Caco-2 (cell line): ENCODE measurements at regions of chr6 and their contacts with region 1.

Region 1: GRCh38 chr6:1263039-1263849 is 48.7 kb upstream of the FOXQ1 start:
- DNase-seq: peak; percentile 82 to 83
- H3K4me3 ChIP-seq: no peak overlapping the region
- H3K4me3 Mint-ChIP-seq: peak overlapping the region; percentile 73
- H3K27ac Mint-ChIP-seq: peak overlapping the region; percentile 100
- H3K4me1 ChIP-seq: peaks cover 67% of the 10 kb centered on the region
- H3K4me1 Mint-ChIP-seq: peaks cover 30% of the 10 kb centered on the region
- H3K27me3 ChIP-seq: no peaks in the 10 kb centered on the region
- H3K27me3 Mint-ChIP-seq: no peaks in the 10 kb centered on the region
- CTCF ChIP-seq: peak in 1 of 2 experiments; percentile 35

Region 2: GRCh38 chr6:1055015-1055921 is 208.0 kb before region 1 on chr6:
- CTCF ChIA-PET with region 1: interaction called, 3 read pairs
- POLR2A ChIA-PET with region 1: no interaction called
- intact Hi-C with region 1: loop called (anchors 1 kb)
- DNase-seq: peak; percentile 93
- H3K4me3 ChIP-seq: no peak overlapping the region
- H3K4me3 Mint-ChIP-seq: no peak overlapping the region
- H3K27ac Mint-ChIP-seq: no peak overlapping the region
- H3K4me1 ChIP-seq: peaks cover 52% of the 10 kb centered on the region
- H3K4me1 Mint-ChIP-seq: peaks cover 18% of the 10 kb centered on the region
- H3K27me3 ChIP-seq: no peaks in the 10 kb centered on the region
- H3K27me3 Mint-ChIP-seq: no peaks in the 10 kb centered on the region
- CTCF ChIP-seq: no peak

Region 3: DNA sequence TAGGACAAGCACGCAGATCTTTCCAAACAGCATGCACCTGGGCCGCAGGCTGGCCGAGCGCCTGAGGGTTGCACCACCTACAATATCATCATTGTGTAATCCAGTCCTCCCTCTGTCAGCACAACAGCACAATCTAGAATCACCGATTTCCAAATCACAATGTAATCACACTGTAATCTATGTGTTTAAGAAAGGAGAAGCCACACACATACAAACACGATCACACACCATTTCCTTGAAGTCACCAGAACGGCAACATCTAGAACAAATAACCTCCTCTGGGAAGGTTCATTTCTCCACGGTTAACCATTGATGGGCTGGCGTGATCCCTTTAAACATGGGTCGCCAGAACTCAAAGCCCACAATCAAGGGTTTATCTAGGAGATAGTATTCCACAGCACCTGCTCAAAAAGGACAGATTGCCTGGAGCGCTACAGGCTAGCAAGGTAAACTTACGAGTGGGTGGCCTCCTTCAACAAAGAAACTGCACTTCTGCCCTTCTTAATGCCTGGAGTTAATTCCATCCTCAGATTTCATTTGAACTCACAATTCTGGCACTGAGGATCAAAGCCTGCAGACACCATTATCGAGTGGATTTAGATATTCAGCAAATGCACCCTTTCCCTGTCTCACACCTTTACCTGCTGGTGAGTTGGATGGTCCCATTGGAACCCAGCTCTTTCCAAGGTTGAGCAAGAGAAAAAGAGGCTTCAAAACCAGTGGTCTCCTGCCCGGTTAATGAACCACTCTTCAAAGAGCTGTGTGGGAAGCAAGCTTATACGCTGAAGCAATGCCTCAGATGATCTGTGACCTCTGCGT is 35.1 kb before region 1 on chr6:
- CTCF ChIA-PET with region 1: interaction called, 10 read pairs
- POLR2A ChIA-PET with region 1: interaction called, 13 read pairs
- intact Hi-C with region 1: loop called (anchors 1 kb)
- DNase-seq: peak; percentile 91 to 94
- H3K4me3 ChIP-seq: peak overlapping the region; percentile 0; the same call in 1 of the 2 replicates
- H3K4me3 Mint-ChIP-seq: peak overlapping the region; percentile 52
- H3K27ac Mint-ChIP-seq: peak overlapping the region; percentile 67
- H3K4me1 ChIP-seq: peaks cover 57% of the 10 kb centered on the region
- H3K4me1 Mint-ChIP-seq: peaks cover 63% of the 10 kb centered on the region
- H3K27me3 ChIP-seq: no peaks in the 10 kb centered on the region
- H3K27me3 Mint-ChIP-seq: no peaks in the 10 kb centered on the region
- CTCF ChIP-seq: no peak

Region 4: GRCh38 chr6:1281746-1282145 is 18.5 kb after region 1 on chr6:
- CTCF ChIA-PET with region 1: no interaction called
- POLR2A ChIA-PET with region 1: no interaction called
- intact Hi-C with region 1: loop called (anchors 1 kb)
- DNase-seq: no peak
- H3K4me3 ChIP-seq: no peak overlapping the region
- H3K4me3 Mint-ChIP-seq: no peak overlapping the region
- H3K27ac Mint-ChIP-seq: peak overlapping the region; percentile 45
- H3K4me1 ChIP-seq: peaks cover 41% of the 10 kb centered on the region
- H3K4me1 Mint-ChIP-seq: peaks cover 34% of the 10 kb centered on the region
- H3K27me3 ChIP-seq: no peaks in the 10 kb centered on the region
- H3K27me3 Mint-ChIP-seq: no peaks in the 10 kb centered on the region
- CTCF ChIP-seq: no peak

Region 5: GRCh38 chr6:1297746-1298145 is 34.5 kb after region 1 on chr6:
- CTCF ChIA-PET with region 1: no interaction called
- POLR2A ChIA-PET with region 1: no interaction called
- intact Hi-C with region 1: loop called (anchors 1 kb)
- DNase-seq: no peak
- H3K4me3 ChIP-seq: no peak overlapping the region
- H3K4me3 Mint-ChIP-seq: no peak overlapping the region
- H3K27ac Mint-ChIP-seq: no peak overlapping the region
- H3K4me1 ChIP-seq: peaks cover 25% of the 10 kb centered on the region
- H3K4me1 Mint-ChIP-seq: peaks cover 28% of the 10 kb centered on the region
- H3K27me3 ChIP-seq: no peaks in the 10 kb centered on the region
- H3K27me3 Mint-ChIP-seq: no peaks in the 10 kb centered on the region
- CTCF ChIP-seq: no peak

Region 6: DNA sequence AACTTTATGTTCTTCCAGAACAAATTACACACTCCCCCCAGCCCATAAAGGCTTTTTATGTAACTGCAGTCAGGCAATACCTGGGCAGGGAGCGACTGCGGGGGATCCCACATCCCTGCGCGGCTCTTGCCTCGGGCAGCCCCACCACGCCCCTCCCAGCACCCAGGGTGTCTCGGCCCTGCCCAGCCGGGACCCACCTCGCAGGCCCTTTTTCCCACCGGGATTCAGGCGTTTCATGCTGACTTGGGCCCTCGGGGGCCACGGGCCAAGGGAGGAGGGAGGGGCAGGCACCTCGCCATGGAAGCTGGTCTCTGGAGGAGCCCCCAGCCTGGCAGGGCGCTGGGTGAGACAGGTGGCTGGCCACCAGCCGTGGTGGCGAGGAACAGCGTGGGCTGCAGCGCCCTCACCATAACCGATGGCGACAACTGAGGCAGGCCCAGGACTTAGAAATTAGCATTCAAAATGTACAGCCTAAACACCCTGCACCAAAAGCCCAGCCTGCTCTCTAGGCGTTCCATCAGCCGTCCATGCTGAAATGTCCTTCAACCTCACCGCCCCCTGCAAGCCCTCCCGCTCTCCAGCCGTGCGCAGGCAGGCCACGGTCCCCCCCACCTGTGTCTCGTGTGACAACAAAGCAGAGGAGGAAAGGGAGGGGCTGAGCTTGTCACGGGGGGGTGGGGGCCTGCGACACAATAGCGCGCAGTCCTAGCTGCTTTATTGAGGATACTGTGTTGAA is 331.4 kb after region 1 on chr6:
- CTCF ChIA-PET with region 1: no interaction called
- POLR2A ChIA-PET with region 1: no interaction called
- intact Hi-C with region 1: no loop called
- DNase-seq: no peak
- H3K4me3 ChIP-seq: no peak overlapping the region
- H3K4me3 Mint-ChIP-seq: no peak overlapping the region
- H3K27ac Mint-ChIP-seq: no peak overlapping the region
- H3K4me1 ChIP-seq: peaks cover 22% of the 10 kb centered on the region
- H3K4me1 Mint-ChIP-seq: peaks cover 20% of the 10 kb centered on the region
- H3K27me3 ChIP-seq: no peaks in the 10 kb centered on the region
- H3K27me3 Mint-ChIP-seq: peaks cover 5% of the 10 kb centered on the region
- CTCF ChIP-seq: no peak